Activated CD8-positive, alpha-beta T cell treated with anti-CD3 and anti-CD28 coated beads for 36 hours (primary cell): ENCODE measurements at regions of chr7 and their contacts with region 1.

Region 1: DNA sequence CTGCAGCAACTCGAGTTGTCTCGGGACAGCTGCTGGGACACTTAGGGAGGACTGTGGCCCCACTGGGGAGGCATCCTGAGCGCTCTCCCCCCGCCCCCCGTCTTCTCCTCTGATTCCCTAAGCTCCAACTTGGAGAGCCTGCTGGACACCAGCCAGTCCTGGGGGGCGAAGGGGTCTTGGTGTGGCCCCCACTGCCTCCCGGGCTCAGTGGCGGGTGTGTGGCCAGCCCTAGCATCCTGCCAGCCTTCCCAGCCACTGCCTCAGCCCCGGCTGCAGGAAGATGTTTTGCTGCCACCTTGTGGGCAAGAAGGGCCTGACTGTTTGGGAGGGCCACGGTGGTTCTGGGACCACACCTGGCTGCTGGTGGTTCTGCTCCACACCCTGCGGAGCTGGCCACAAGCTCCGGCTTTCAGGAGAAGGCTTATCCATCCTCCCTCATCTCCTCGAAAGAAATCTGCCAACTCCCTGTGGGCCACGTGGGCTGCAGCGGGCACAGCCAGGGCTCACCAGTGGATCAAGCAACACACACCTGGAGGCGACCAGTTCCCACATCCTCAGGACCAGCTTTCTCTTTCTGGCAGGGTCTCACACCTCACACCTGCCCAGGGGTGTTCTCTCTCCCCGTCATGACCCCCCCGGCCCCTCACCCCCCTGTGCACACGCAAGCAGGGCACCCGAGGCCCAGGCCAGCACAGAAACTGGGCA is 24.8 kb downstream of the AGAP3 start:
- DNase-seq: peak; percentile 83
- ATAC-seq: peak; percentile 74
- H3K4me3 Mint-ChIP-seq: no peak overlapping the region
- H3K27ac Mint-ChIP-seq: no peak overlapping the region
- H3K4me1 Mint-ChIP-seq: peaks cover 4% of the 10 kb centered on the region
- H3K27me3 Mint-ChIP-seq: peaks cover 17% of the 10 kb centered on the region
- CTCF ChIP-seq: peak; percentile 91

Region 2: GRCh38 chr7:151008511-151009323 is 102.4 kb before region 1 on chr7:
- CTCF ChIA-PET with region 1: interaction called, 15 read pairs
- POLR2A ChIA-PET with region 1: no interaction called
- intact Hi-C with region 1: no loop called
- DNase-seq: peak; percentile 83
- ATAC-seq: peak; percentile 53
- H3K4me3 Mint-ChIP-seq: peak overlapping the region; percentile 77
- H3K27ac Mint-ChIP-seq: peak overlapping the region; percentile 86
- H3K4me1 Mint-ChIP-seq: peaks cover 49% of the 10 kb centered on the region
- H3K27me3 Mint-ChIP-seq: no peaks in the 10 kb centered on the region
- CTCF ChIP-seq: peak; percentile 83

Region 3: GRCh38 chr7:151028131-151028947 is 82.8 kb before region 1 on chr7 and contains the start of gene ABCB8:
- CTCF ChIA-PET with region 1: interaction called, 26 read pairs
- POLR2A ChIA-PET with region 1: no interaction called
- intact Hi-C with region 1: no loop called
- DNase-seq: peak; percentile 99
- ATAC-seq: peak; percentile 95
- H3K4me3 Mint-ChIP-seq: peak within 1 kb of the TSS; percentile 88
- H3K27ac Mint-ChIP-seq: peak within 1 kb of the TSS; percentile 95
- H3K4me1 Mint-ChIP-seq: peaks cover 17% of the 10 kb centered on the region
- H3K27me3 Mint-ChIP-seq: no peaks in the 10 kb centered on the region
- CTCF ChIP-seq: peak; percentile 55
- total RNA-seq, gene ABCB8: 41.4 to 47.5 TPM

Region 4: GRCh38 chr7:151085691-151086620 is 25.1 kb before region 1 on chr7 and contains the start of gene AGAP3:
- CTCF ChIA-PET with region 1: interaction called, 38 read pairs
- POLR2A ChIA-PET with region 1: interaction called, 3 read pairs
- intact Hi-C with region 1: no loop called
- DNase-seq: peak; percentile 50
- ATAC-seq: peak; percentile 6
- H3K4me3 Mint-ChIP-seq: peak within 1 kb of the TSS; percentile 80
- H3K27ac Mint-ChIP-seq: peak within 1 kb of the TSS; percentile 68
- H3K4me1 Mint-ChIP-seq: peaks cover 35% of the 10 kb centered on the region
- H3K27me3 Mint-ChIP-seq: peaks cover 22% of the 10 kb centered on the region
- CTCF ChIP-seq: no peak
- total RNA-seq, gene AGAP3: 20.6 to 22.0 TPM

Region 5: GRCh38 chr7:151123822-151124464 is 12.8 kb after region 1 on chr7:
- CTCF ChIA-PET with region 1: interaction called, 11 read pairs
- POLR2A ChIA-PET with region 1: no interaction called
- intact Hi-C with region 1: no loop called
- DNase-seq: peak; percentile 87
- ATAC-seq: peak; percentile 99
- H3K4me3 Mint-ChIP-seq: no peak overlapping the region
- H3K27ac Mint-ChIP-seq: no peak overlapping the region
- H3K4me1 Mint-ChIP-seq: no peaks in the 10 kb centered on the region
- H3K27me3 Mint-ChIP-seq: no peaks in the 10 kb centered on the region
- CTCF ChIP-seq: peak; percentile 94

Region 6: GRCh38 chr7:151304856-151305255 is 193.8 kb after region 1 on chr7:
- CTCF ChIA-PET with region 1: no interaction called
- POLR2A ChIA-PET with region 1: no interaction called
- intact Hi-C with region 1: loop called (anchors 10 kb)
- DNase-seq: no peak
- ATAC-seq: no peak
- H3K4me3 Mint-ChIP-seq: peak overlapping the region; percentile 23
- H3K27ac Mint-ChIP-seq: no peak overlapping the region
- H3K4me1 Mint-ChIP-seq: peaks cover 6% of the 10 kb centered on the region
- H3K27me3 Mint-ChIP-seq: peaks cover 24% of the 10 kb centered on the region
- CTCF ChIP-seq: no peak